ENCODE measurements at regions of chr17 and their contacts with region 1.

Region 1: GRCh38 chr17:7045909-7046724 is 2.2 kb upstream of the SLC16A11 start:
- DNase-seq: peak; percentile 87
- ATAC-seq: peak; percentile 67
- H3K4me3 ChIP-seq: no peak overlapping the region
- H3K27ac ChIP-seq: no peak overlapping the region
- H3K4me1 ChIP-seq: peaks cover 6% of the 10 kb centered on the region
- H3K27me3 ChIP-seq: peaks cover 32% of the 10 kb centered on the region
- CTCF ChIP-seq: peak; percentile 93
- POLR2A ChIP-seq: no peak
- RAD21 ChIP-seq: peak; percentile 90

Region 2: GRCh38 chr17:7136266-7136877 is 90.3 kb after region 1 on chr17:
- CTCF ChIA-PET with region 1: interaction called, 21 read pairs
- POLR2A ChIA-PET with region 1: no interaction called
- dilution Hi-C with region 1: no loop called
- in situ Hi-C with region 1: loop called (anchors 5 kb)
- intact Hi-C with region 1: loop called (anchors 1 kb)
- DNase-seq: peak; percentile 69
- ATAC-seq: peak; percentile 44; the same call in 1 of the 2 replicates
- H3K4me3 ChIP-seq: no peak overlapping the region
- H3K27ac ChIP-seq: no peak overlapping the region
- H3K4me1 ChIP-seq: no peaks in the 10 kb centered on the region
- H3K27me3 ChIP-seq: peaks cover 47% of the 10 kb centered on the region
- CTCF ChIP-seq: peak; percentile 90
- POLR2A ChIP-seq: no peak
- RAD21 ChIP-seq: peak; percentile 88

Region 3: DNA sequence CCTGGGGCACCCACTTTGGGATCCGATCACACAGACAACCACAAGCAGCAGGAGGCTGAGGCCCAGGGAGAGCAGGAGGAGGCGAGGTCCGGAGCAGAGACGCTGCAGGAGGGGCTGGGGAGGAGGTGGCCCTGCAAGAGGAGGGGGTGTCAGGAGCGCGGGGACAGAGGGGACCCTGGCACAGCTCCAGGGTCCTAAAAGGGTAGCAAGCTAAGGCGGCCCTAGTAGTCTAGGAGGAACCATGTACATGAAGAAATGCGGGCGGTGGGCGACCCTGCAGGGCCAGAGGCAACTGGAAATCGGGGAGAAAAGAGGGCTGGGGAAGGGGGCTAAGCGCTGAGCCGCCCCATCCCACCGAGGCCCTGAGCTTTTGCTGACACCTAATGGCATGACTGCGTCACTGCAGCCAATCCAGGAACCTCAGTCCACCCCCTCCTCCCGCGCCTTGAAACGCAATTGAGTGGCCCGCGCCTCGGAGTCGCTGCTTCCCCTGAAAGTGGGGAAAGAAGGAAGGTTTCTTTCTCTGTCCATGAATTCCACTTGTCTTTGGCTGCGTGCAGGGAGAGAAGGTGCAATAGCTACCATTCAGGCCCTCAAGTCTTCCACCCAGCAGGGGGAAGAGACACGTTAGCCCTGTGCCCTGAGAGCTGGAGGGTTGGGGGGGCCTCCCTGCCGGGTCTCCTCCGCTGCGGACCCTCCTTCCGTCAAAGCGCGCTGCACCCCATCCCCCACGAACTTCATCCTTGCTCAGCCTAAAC is 131.3 kb after region 1 on chr17:
- CTCF ChIA-PET with region 1: interaction called, 10 read pairs
- POLR2A ChIA-PET with region 1: no interaction called
- dilution Hi-C with region 1: no loop called
- in situ Hi-C with region 1: no loop called
- intact Hi-C with region 1: no loop called
- DNase-seq: peak; percentile 64
- ATAC-seq: peak; percentile 93
- H3K4me3 ChIP-seq: peak overlapping the region; percentile 59
- H3K27ac ChIP-seq: peak overlapping the region; percentile 21; the same call in 1 of the 2 replicates
- H3K4me1 ChIP-seq: peaks cover 2% of the 10 kb centered on the region; the same call in 1 of the 2 replicates
- H3K27me3 ChIP-seq: no peaks in the 10 kb centered on the region
- CTCF ChIP-seq: peak; percentile 90
- POLR2A ChIP-seq: no peak; the same call in 1 of the 2 replicates
- RAD21 ChIP-seq: peak; percentile 77

Region 4: GRCh38 chr17:7296189-7296902 is 250.2 kb after region 1 on chr17:
- CTCF ChIA-PET with region 1: interaction called, 9 read pairs
- POLR2A ChIA-PET with region 1: no interaction called
- dilution Hi-C with region 1: no loop called
- in situ Hi-C with region 1: loop called (anchors 10 kb)
- intact Hi-C with region 1: loop called (anchors 1 kb)
- DNase-seq: peak; percentile 74
- ATAC-seq: peak; percentile 93
- H3K4me3 ChIP-seq: no peak overlapping the region; the same call in 1 of the 2 replicates
- H3K27ac ChIP-seq: no peak overlapping the region
- H3K4me1 ChIP-seq: peaks cover 3% of the 10 kb centered on the region
- H3K27me3 ChIP-seq: peaks cover 44% of the 10 kb centered on the region
- CTCF ChIP-seq: peak; percentile 94
- POLR2A ChIP-seq: 0 out of 2 replicates have a peak, but pooled peaks have one; percentile 39
- RAD21 ChIP-seq: peak; percentile 95

Region 5: GRCh38 chr17:7306911-7307686 is 261.0 kb after region 1 on chr17 and contains the start of gene EIF5A:
- CTCF ChIA-PET with region 1: interaction called, 3 read pairs
- POLR2A ChIA-PET with region 1: no interaction called
- dilution Hi-C with region 1: no loop called
- in situ Hi-C with region 1: loop called (anchors 10 kb)
- intact Hi-C with region 1: no loop called
- DNase-seq: peak; percentile 100
- ATAC-seq: peak; percentile 86
- H3K4me3 ChIP-seq: peak within 1 kb of the TSS; percentile 68
- H3K27ac ChIP-seq: peak within 1 kb of the TSS; percentile 74
- H3K4me1 ChIP-seq: no peaks in the 10 kb centered on the region; the same call in 1 of the 2 replicates
- H3K27me3 ChIP-seq: no peaks in the 10 kb centered on the region; the same call in 1 of the 2 replicates
- CTCF ChIP-seq: no peak
- POLR2A ChIP-seq: peak; percentile 69; the same call in 1 of the 2 replicates
- RAD21 ChIP-seq: no peak
- total RNA-seq, gene EIF5A: 718 and 883 TPM in 2 replicates